Psoas muscle (tissue), 8 donors: ENCODE measurements at regions of chr10 and their contacts with region 1.

Region 1: DNA sequence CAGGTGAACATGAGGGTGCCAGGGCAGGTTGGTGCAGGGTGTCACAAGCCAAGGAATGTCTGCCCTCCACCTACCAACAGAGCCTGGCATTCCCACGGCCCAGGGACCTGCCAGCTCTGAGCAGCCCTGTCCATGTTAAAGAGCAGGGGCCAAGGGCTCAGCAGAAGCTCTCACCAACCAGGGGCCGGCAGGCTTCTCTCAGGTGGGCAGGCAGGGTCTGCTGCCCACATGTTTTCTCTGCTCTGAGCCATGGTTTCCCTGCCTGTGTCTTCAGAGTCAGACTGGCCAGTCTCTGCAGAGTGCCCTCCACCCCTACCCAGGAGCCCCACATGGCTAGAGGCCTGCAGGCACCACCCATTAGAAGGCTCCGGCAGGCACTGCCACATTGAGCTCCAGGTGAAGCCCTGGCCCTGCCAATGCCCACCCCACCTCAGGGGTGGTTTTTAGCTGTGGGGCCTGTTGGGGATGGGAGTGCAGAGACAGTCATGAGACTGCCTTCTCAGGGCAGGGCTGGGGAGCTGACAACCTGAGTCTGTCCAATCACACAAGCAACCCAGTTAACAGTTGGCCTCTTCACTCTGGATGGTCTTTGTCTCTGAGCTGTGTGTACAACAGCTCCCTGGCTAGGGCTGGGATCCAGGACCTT is 135.9 kb downstream of the ARHGAP22 start:
- DNase-seq: no peak
- ATAC-seq: no peak
- H3K4me3 ChIP-seq: no peak overlapping the region
- H3K27ac ChIP-seq: no peak overlapping the region
- H3K4me1 ChIP-seq: peaks cover 14% of the 10 kb centered on the region
- H3K27me3 ChIP-seq: peaks cover 0 to 3% (median 0%) of the 10 kb centered on the region in 3 donors
- CTCF ChIP-seq: no peak

Region 2: DNA sequence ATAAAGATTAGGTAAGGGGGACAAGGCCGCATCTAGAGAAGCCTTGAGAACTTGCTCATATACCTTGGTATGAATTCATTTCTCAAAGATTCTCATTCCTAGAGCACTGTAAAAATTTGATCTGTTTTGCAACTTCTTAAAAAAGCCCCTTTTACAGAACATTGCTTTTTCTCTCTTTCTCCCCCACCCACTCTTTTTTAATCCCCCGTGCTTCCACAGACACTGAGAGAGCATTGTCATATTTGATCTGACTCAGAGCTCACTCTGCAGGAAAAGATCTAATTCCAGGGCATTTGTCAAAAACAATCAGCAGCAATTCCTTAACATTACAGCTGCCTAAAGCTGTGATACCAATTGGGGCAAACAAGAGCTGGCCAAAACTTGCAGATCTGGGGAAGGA is 43.9 kb after region 1 on chr10:
- intact Hi-C with region 1: loop called in 1 of 2 experiments (anchors 1 kb)
- DNase-seq: no peak
- ATAC-seq: no peak
- H3K4me3 ChIP-seq: no peak overlapping the region
- H3K27ac ChIP-seq: no peak overlapping the region
- H3K4me1 ChIP-seq: no peaks in the 10 kb centered on the region
- H3K27me3 ChIP-seq: no peaks in the 10 kb centered on the region
- CTCF ChIP-seq: no peak